ENCODE measurements at regions of chr3 and their contacts with region 1.

Region 1: GRCh38 chr3:155870133-155870944 is at the start of gene GMPS:
- DNase-seq: peak; percentile 87 to 98 (median 96)
- ATAC-seq: peak; percentile 97
- H3K4me3 ChIP-seq: peak within 1 kb of the TSS; percentile 90
- H3K4me3 Mint-ChIP-seq: peak within 1 kb of the TSS; percentile 92 to 100 (median 98)
- H3K27ac ChIP-seq: peak within 1 kb of the TSS; percentile 94
- H3K27ac Mint-ChIP-seq: peak within 1 kb of the TSS; percentile 89 to 97 (median 96)
- H3K4me1 ChIP-seq: peaks cover 8% of the 10 kb centered on the region in 2 donors
- H3K4me1 Mint-ChIP-seq: peaks cover 17 to 35% (median 26%) of the 10 kb centered on the region in 7 donors
- H3K27me3 ChIP-seq: no peaks in the 10 kb centered on the region
- H3K27me3 Mint-ChIP-seq: no peaks in the 10 kb centered on the region
- total RNA-seq, gene GMPS: 36.3 to 85.1 (median 45.4) TPM

Region 2: GRCh38 chr3:155744626-155745324 is 125.6 kb before region 1 on chr3 and contains the start of gene PLCH1:
- CTCF ChIA-PET with region 1: no interaction called
- POLR2A ChIA-PET with region 1: no interaction called
- intact Hi-C with region 1: loop called in 1 of 2 experiments (anchors 2 kb)
- DNase-seq: peak; percentile 4 to 47 (median 30)
- ATAC-seq: peak; percentile 78
- H3K4me3 ChIP-seq: peak within 1 kb of the TSS; percentile 80
- H3K4me3 Mint-ChIP-seq: peak within 1 kb of the TSS; percentile 84 to 93 (median 92)
- H3K27ac ChIP-seq: peak within 1 kb of the TSS; percentile 37
- H3K27ac Mint-ChIP-seq: peak within 1 kb of the TSS in 8 of 9 donors; percentile 14 to 70 (median 50)
- H3K4me1 ChIP-seq: peaks cover 5 to 13% of the 10 kb centered on the region in 2 donors
- H3K4me1 Mint-ChIP-seq: peaks cover 12 to 27% (median 17%) of the 10 kb centered on the region in 7 donors
- H3K27me3 ChIP-seq: peaks cover 5 to 11% of the 10 kb centered on the region in 2 donors
- H3K27me3 Mint-ChIP-seq: peaks cover 35 to 80% (median 46%) of the 10 kb centered on the region in 5 donors
- total RNA-seq, gene PLCH1: 0.56 TPM in 1 of 5 experiments, not detected in the others

Region 3: DNA sequence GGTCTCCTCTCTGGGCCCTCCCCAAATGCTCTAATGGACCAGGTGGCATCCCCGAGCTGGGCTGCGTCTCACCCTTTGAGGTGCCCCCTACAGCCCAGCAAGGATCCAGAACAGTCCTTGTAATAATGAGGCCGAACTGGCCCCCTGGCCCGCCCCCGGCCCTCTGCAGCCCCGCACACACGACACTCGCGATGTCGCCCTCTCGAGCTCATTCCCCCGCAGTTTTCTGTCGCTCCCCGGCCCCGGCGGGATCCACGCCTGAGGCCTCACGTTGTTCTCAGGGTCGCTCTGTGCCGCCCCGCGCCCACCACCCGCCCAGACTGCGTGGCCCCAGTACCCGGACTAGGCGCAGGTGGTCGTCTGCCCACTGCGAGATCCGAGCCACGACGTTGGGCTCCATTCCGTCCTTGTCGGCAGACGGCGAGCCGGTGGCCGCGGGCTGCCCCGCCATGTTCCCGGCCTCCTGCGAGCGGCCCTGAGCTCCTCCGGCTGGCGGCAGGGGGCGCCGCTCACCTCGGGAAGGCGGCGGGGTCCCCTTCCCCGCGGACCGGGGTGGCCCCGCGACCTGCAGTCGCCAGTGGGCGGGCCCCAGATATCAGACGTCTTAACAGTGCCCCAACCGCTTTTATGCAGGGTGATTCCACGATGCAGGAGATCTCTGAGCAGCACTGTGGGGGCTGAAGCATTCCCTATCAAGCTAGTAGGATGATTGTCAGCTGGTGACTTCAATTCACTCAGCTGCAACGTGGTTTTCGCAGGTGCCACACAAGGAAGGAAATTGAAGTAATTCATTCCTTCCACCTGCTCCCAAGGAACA is 64.3 kb before region 1 on chr3 and contains the start of gene C3orf33:
- CTCF ChIA-PET with region 1: interaction called, 12 read pairs
- POLR2A ChIA-PET with region 1: interaction called, 24 read pairs
- intact Hi-C with region 1: loop called (anchors 1 kb)
- DNase-seq: peak; percentile 52 to 85 (median 78)
- ATAC-seq: peak; percentile 98
- H3K4me3 ChIP-seq: peak within 1 kb of the TSS; percentile 71
- H3K4me3 Mint-ChIP-seq: peak within 1 kb of the TSS; percentile 79 to 91 (median 90)
- H3K27ac ChIP-seq: peak within 1 kb of the TSS; percentile 79
- H3K27ac Mint-ChIP-seq: peak within 1 kb of the TSS; percentile 71 to 94 (median 82)
- H3K4me1 ChIP-seq: no peaks in the 10 kb centered on the region
- H3K4me1 Mint-ChIP-seq: peaks cover 8 to 28% (median 17%) of the 10 kb centered on the region in 7 donors
- H3K27me3 ChIP-seq: no peaks in the 10 kb centered on the region
- H3K27me3 Mint-ChIP-seq: peaks cover 6 to 15% (median 10%) of the 10 kb centered on the region in 5 donors
- total RNA-seq, gene C3orf33: 1.1 to 4.6 (median 2.7) TPM

Region 4: GRCh38 chr3:155890671-155891190 is 20.4 kb after region 1 on chr3:
- CTCF ChIA-PET with region 1: no interaction called
- POLR2A ChIA-PET with region 1: no interaction called
- intact Hi-C with region 1: no loop called
- DNase-seq: no peak
- ATAC-seq: no peak
- H3K4me3 ChIP-seq: no peak overlapping the region
- H3K4me3 Mint-ChIP-seq: no peak overlapping the region
- H3K27ac ChIP-seq: no peak overlapping the region
- H3K27ac Mint-ChIP-seq: no peak overlapping the region
- H3K4me1 ChIP-seq: no peaks in the 10 kb centered on the region
- H3K4me1 Mint-ChIP-seq: peaks cover 28 to 48% (median 39%) of the 10 kb centered on the region in 7 donors
- H3K27me3 ChIP-seq: no peaks in the 10 kb centered on the region
- H3K27me3 Mint-ChIP-seq: no peaks in the 10 kb centered on the region

Region 5: DNA sequence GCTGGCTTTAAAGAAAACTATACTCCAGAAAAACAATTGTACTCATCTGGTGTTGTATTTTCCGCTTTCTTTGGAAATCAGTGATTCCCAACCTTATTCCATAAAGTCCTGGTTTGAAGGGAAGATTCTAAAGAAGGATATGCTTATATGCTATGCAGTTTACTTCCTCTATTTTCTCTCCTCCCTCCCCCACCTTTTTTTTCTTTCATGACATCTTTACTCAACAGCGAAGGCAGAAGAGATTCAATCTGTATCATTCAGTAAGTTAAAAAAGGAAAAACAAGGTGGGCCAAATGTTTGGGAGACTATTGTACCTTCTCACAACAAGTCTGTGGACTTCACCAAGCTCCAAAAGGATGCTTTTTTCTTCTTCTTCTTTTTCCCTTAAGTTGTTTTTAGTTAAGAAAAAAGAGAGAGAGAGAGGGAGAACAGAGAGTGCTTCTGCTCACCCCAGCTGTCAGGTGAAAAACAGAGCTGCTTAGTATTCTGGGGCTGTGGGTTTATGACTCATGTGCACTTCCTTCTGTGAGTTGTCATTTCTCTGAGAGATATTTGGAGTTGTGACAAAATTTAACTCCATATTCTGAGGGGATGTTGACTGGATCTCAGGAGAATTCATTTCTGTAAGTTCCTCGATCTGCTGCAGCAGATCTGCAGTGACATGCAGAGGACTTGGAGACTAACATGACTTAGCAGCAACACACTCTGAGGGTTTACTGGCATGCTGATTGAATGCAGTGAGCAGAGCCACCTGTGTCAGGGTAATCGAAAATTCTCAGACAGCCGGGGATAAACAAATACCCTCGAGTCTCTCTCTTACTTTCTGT is 613.8 kb after region 1 on chr3:
- CTCF ChIA-PET with region 1: no interaction called
- POLR2A ChIA-PET with region 1: no interaction called
- intact Hi-C with region 1: loop called (anchors 2 to 5 kb)
- DNase-seq: peak in 8 of 9 donors; percentile 35 to 68 (median 62)
- ATAC-seq: peak; percentile 88
- H3K4me3 ChIP-seq: peak overlapping the region; percentile 47
- H3K4me3 Mint-ChIP-seq: peak overlapping the region; percentile 52 to 85 (median 74)
- H3K27ac ChIP-seq: peak overlapping the region; percentile 63
- H3K27ac Mint-ChIP-seq: peak overlapping the region; percentile 76 to 95 (median 83)
- H3K4me1 ChIP-seq: peaks cover 21 to 25% of the 10 kb centered on the region in 2 donors
- H3K4me1 Mint-ChIP-seq: peaks cover 14 to 40% (median 35%) of the 10 kb centered on the region in 7 donors
- H3K27me3 ChIP-seq: no peaks in the 10 kb centered on the region
- H3K27me3 Mint-ChIP-seq: peaks cover 0 to 17% (median 0%) of the 10 kb centered on the region in 5 donors

Measured in naive thymus-derived CD4-positive, alpha-beta T cell (primary cell).